ENCODE measurements at regions of chr21 and their contacts with region 1.

Region 1: DNA sequence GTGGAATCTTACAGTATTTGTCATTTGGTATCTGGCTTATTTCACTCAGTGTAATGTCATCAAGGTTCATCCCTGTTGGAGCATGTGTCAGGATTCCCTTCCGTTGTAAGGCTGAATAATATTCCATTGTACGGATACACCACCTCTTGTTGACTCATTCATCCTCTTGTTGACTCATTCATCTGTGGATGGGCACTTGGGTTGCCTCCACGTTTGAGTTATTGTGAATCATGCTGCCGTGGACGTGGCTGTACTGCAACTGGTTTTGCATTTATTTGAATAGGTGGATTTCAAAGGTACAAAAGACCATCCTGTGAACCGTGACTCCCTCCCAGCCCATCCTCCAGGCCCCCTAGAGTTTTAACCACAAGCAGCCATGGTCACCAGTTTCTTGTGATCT is 11.9 kb upstream of the TCP10L start:
- DNase-seq: no peak
- H3K4me3 ChIP-seq: no peak overlapping the region
- H3K4me3 Mint-ChIP-seq: no peak overlapping the region
- H3K27ac Mint-ChIP-seq: no peak overlapping the region
- H3K4me1 ChIP-seq: peaks cover 14% of the 10 kb centered on the region
- H3K4me1 Mint-ChIP-seq: peaks cover 10% of the 10 kb centered on the region
- H3K27me3 ChIP-seq: no peaks in the 10 kb centered on the region
- H3K27me3 Mint-ChIP-seq: no peaks in the 10 kb centered on the region
- CTCF ChIP-seq: no peak

Region 2: DNA sequence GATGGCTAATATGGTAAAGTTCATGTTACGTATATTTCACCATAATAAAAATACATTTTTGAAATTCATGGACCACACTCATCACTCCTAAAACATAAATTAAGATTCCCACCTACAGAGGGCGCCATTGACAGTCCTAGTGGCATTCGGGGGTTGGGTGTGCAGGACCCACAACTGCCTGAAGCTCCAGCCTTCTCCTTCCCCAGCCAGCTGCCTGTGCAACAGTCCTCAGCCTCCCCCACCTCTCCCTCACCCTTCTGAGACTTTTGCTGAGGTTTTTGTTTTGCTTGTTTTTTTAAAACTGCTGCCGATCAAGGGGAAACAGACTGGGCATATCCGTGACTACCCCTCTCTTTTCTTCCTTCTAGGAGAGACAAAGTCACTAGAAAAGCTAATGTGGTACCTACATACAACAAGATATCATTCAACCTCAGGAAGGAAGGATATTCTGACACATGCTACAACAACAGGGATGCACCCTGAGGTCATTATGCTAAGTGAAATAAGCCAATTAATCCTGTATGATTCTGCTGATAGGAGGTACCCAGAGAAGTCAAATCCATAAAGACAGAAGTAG is 193.9 kb before region 1 on chr21:
- CTCF ChIA-PET with region 1: interaction called, 46 read pairs
- POLR2A ChIA-PET with region 1: interaction called, 8 read pairs
- intact Hi-C with region 1: loop called (anchors 1 kb)
- DNase-seq: peak; percentile 53 to 74
- H3K4me3 ChIP-seq: no peak overlapping the region
- H3K4me3 Mint-ChIP-seq: no peak overlapping the region
- H3K27ac Mint-ChIP-seq: no peak overlapping the region
- H3K4me1 ChIP-seq: no peaks in the 10 kb centered on the region
- H3K4me1 Mint-ChIP-seq: no peaks in the 10 kb centered on the region
- H3K27me3 ChIP-seq: no peaks in the 10 kb centered on the region; the same call in 1 of the 2 replicates
- H3K27me3 Mint-ChIP-seq: peaks cover 6% of the 10 kb centered on the region
- CTCF ChIP-seq: peak; percentile 66 to 69

Region 3: DNA sequence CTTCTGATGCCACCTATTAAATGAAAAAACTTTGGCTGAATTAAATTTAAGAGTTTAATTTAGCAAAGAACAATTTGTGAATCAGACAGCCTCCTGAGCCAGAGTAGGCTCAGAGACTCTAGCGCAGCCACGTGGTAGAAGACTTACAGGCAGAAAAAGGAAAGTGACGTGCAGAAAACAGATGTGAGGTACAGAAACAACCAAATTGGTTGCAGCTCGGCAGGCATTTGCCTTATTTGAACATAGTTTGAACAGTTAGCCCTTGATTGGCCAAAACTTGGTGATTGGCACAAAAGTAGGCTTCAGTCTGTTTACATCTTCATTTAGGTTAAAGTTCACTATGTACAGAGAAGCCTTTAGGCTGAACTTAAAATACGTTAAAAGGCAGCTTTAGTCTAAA is 34.8 kb before region 1 on chr21:
- CTCF ChIA-PET with region 1: interaction called, 12 read pairs
- POLR2A ChIA-PET with region 1: no interaction called
- intact Hi-C with region 1: no loop called
- DNase-seq: no peak
- H3K4me3 ChIP-seq: no peak overlapping the region
- H3K4me3 Mint-ChIP-seq: no peak overlapping the region
- H3K27ac Mint-ChIP-seq: no peak overlapping the region
- H3K4me1 ChIP-seq: no peaks in the 10 kb centered on the region
- H3K4me1 Mint-ChIP-seq: no peaks in the 10 kb centered on the region
- H3K27me3 ChIP-seq: no peaks in the 10 kb centered on the region
- H3K27me3 Mint-ChIP-seq: no peaks in the 10 kb centered on the region
- CTCF ChIP-seq: no peak

Region 4: DNA sequence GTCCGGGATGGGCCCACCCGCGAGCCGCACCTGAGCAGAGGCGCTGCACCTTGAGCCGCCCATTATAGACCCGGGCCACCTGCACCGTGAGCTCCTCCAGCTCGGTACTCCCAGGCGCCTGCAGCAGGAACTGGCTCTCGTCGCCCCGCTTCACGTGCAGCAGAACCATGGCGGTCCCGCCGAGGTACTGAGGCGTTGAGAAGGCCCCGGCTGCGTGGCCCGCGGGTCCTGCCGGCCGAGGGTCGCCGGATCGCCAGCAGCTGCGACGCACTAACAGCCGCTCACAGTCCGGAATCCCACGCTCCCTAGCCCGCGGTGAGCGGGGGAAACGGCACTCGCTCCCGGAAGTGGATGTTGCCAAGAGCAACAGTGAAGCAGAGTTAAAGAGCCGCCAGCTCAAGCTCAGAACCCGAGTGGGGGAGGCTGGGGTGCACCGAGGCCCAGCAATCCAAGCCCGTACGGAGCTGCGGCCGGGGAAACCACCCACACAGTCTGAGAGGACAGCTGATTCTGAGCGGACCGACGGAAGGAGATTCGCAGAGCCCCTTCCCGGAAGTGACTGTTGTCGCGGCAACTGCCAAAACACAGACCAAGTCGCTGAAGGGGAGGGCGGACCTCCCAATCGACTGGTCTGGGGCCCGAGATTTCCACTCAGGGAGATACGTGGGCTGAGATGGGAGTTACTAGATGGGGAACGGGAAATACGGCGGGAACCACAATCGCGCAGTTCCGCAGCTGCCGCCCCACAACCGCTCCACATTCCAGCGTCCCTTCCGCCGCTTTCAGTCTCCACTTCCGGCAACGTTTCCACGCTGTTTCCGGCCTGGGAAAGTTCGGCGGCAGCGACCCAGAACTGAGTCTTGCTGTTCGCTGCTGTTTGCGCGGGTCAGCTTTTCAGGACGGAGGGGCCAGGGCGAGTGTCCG is 15.1 kb after region 1 on chr21 and contains the start of gene CFAP298:
- CTCF ChIA-PET with region 1: interaction called, 18 read pairs
- POLR2A ChIA-PET with region 1: interaction called, 8 read pairs
- intact Hi-C with region 1: no loop called
- DNase-seq: peak; percentile 88
- H3K4me3 ChIP-seq: peak within 1 kb of the TSS; percentile 93
- H3K4me3 Mint-ChIP-seq: peak within 1 kb of the TSS; percentile 79
- H3K27ac Mint-ChIP-seq: peak within 1 kb of the TSS; percentile 98
- H3K4me1 ChIP-seq: 0 out of 2 replicates have a peak, but pooled peaks cover 6% of the 10 kb centered on the region
- H3K4me1 Mint-ChIP-seq: no peaks in the 10 kb centered on the region
- H3K27me3 ChIP-seq: no peaks in the 10 kb centered on the region
- H3K27me3 Mint-ChIP-seq: peaks cover 3% of the 10 kb centered on the region
- CTCF ChIP-seq: no peak
- total RNA-seq, gene CFAP298: 54.5 and 61.2 TPM in 2 replicates